Ascending aorta (tissue), 2 donors: ENCODE measurements at regions of chr20 and their contacts with region 1.

Region 1: GRCh38 chr20:23270382-23270911 is 80.1 kb upstream of the NXT1 start:
- DNase-seq: peak; percentile 36 to 73
- H3K4me3 ChIP-seq: no peak overlapping the region
- H3K27ac ChIP-seq: peak overlapping the region; percentile 84 to 88
- H3K4me1 ChIP-seq: peaks cover 6 to 11% of the 10 kb centered on the region in 2 donors
- H3K27me3 ChIP-seq: no peaks in the 10 kb centered on the region
- CTCF ChIP-seq: no peak

Region 2: GRCh38 chr20:23156170-23156841 is 114.1 kb before region 1 on chr20:
- intact Hi-C with region 1: loop called (anchors 5 kb)
- DNase-seq: peak; percentile 63 to 87
- H3K4me3 ChIP-seq: no peak overlapping the region
- H3K27ac ChIP-seq: peak overlapping the region; percentile 93 to 96
- H3K4me1 ChIP-seq: peaks cover 17 to 79% of the 10 kb centered on the region in 2 donors
- H3K27me3 ChIP-seq: no peaks in the 10 kb centered on the region
- CTCF ChIP-seq: no peak

Region 3: GRCh38 chr20:23200918-23201317 is 69.5 kb before region 1 on chr20:
- intact Hi-C with region 1: no loop called
- DNase-seq: peak in 1 of 2 donors; percentile 62
- H3K4me3 ChIP-seq: no peak overlapping the region
- H3K27ac ChIP-seq: no peak overlapping the region
- H3K4me1 ChIP-seq: peaks cover 0 to 16% of the 10 kb centered on the region in 2 donors
- H3K27me3 ChIP-seq: no peaks in the 10 kb centered on the region
- CTCF ChIP-seq: peak in 1 of 3 experiments; percentile 15